ENCODE measurements at regions of chr1 and their contacts with region 1.

Region 1: DNA sequence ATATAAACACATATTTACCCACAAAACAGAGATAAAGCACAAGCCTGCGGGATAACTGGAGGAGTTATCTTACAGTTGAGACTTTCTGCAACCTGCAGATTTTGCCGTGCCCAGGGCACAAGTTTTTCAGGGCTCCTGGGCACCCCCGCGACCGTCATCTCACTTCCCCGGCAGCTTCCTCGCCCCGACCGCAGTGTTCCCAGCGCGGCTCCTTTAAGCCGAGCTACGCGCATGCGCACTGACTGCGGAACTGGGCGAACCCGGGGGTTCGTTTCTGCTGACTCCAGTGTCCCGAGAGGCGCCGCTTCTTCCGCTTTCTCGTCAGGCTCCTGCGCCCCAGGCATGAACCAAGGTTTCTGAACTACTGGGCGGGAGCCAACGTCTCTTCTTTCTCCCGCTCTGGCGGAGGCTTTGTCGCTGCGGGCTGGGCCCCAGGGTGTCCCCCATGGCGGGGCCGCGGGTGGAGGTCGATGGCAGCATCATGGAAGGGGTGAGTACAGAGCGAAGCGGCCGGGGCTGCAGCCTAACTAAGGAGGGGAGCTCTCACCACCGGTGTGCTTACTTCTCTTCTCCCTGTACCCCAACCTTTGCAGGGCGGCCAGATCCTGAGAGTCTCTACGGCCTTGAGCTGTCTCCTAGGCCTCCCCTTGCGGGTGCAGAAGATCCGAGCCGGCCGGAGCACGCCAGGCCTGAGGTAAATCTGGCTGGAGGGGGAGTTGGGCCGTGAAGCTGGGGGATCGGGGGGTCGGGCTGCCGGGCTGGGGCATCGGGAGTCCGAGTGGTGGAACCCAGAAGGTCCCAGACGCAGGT is at the start of gene RTCA:
- DNase-seq: peak; percentile 93 to 95
- ATAC-seq: peak; percentile 99
- H3K4me3 ChIP-seq: peak within 1 kb of the TSS; percentile 67 to 100 (median 91)
- H3K27ac ChIP-seq: peak within 1 kb of the TSS; percentile 82 to 93 (median 86)
- H3K4me1 ChIP-seq: peaks cover 15 to 19% of the 10 kb centered on the region in 2 donors
- H3K27me3 ChIP-seq: no peaks in the 10 kb centered on the region
- CTCF ChIP-seq: no peak
- POLR2A ChIP-seq: peak; percentile 64 to 73
- total RNA-seq, gene RTCA: 22.3 to 32.8 (median 24.8) TPM

Region 2: DNA sequence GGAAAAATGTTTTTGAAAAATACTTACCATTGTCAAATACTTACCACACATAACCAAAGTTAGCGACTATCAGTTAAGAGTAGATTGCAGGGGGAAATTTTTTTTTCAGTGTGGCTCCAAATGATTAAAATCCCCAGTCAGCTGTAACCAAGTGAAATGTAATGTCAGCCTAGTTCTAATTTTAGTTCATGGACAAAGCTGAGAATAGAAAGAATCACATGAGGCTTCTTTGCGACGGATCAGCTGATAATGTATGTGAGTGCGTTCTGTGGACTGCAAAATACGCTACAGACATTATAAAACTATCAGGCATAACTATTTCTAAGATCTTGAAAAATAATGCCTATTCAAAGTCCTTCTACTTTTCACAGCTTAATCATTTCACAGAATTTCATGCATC is 88.0 kb before region 1 on chr1 and contains the start of gene LRRC39:
- in situ Hi-C with region 1: no loop called
- intact Hi-C with region 1: loop called (anchors 5 kb)
- DNase-seq: no peak
- ATAC-seq: peak; percentile 94 to 98
- H3K4me3 ChIP-seq: peak within 1 kb of the TSS; percentile 46 to 55 (median 50)
- H3K27ac ChIP-seq: peak within 1 kb of the TSS; percentile 76 to 89 (median 82)
- H3K4me1 ChIP-seq: peaks cover 6 to 17% of the 10 kb centered on the region in 2 donors
- H3K27me3 ChIP-seq: no peaks in the 10 kb centered on the region
- CTCF ChIP-seq: no peak
- POLR2A ChIP-seq: peak in 1 of 2 donors; percentile 41
- total RNA-seq, gene LRRC39: 23.4 to 73.2 (median 42.1) TPM

Region 3: GRCh38 chr1:100213141-100213540 is 53.0 kb before region 1 on chr1:
- in situ Hi-C with region 1: no loop called
- intact Hi-C with region 1: no loop called
- DNase-seq: no peak
- ATAC-seq: no peak
- H3K4me3 ChIP-seq: no peak overlapping the region
- H3K27ac ChIP-seq: no peak overlapping the region
- H3K4me1 ChIP-seq: peaks cover 3 to 7% of the 10 kb centered on the region in 2 donors
- H3K27me3 ChIP-seq: no peaks in the 10 kb centered on the region
- CTCF ChIP-seq: no peak
- POLR2A ChIP-seq: no peak

Region 4: GRCh38 chr1:100249537-100250257 is 16.4 kb before region 1 on chr1 and contains the start of gene DBT:
- in situ Hi-C with region 1: no loop called
- intact Hi-C with region 1: loop called (anchors 1 kb)
- DNase-seq: peak; percentile 96 to 97
- ATAC-seq: peak; percentile 100
- H3K4me3 ChIP-seq: peak within 1 kb of the TSS; percentile 79 to 96 (median 88)
- H3K27ac ChIP-seq: peak within 1 kb of the TSS; percentile 88 to 95 (median 90)
- H3K4me1 ChIP-seq: peaks cover 8 to 11% of the 10 kb centered on the region in 2 donors
- H3K27me3 ChIP-seq: no peaks in the 10 kb centered on the region
- CTCF ChIP-seq: no peak
- POLR2A ChIP-seq: peak; percentile 74 to 84
- total RNA-seq, gene DBT: 7.6 to 11.3 (median 9.6) TPM

Region 5: GRCh38 chr1:100335436-100335835 is 69.3 kb after region 1 on chr1:
- in situ Hi-C with region 1: no loop called
- intact Hi-C with region 1: no loop called
- DNase-seq: no peak
- ATAC-seq: no peak
- H3K4me3 ChIP-seq: no peak overlapping the region
- H3K27ac ChIP-seq: no peak overlapping the region
- H3K4me1 ChIP-seq: no peaks in the 10 kb centered on the region
- H3K27me3 ChIP-seq: no peaks in the 10 kb centered on the region
- CTCF ChIP-seq: no peak
- POLR2A ChIP-seq: no peak

Measured in gastrocnemius medialis (tissue), 4 donors.